Activated naive CD4-positive, alpha-beta T cell treated with anti-CD3 and anti-CD28 coated beads for 36 hours (primary cell): ENCODE measurements at regions of chr9 and their contacts with region 1.

Region 1: GRCh38 chr9:114805670-114806525 is at the start of gene TNFSF15:
- DNase-seq: peak; percentile 75
- H3K4me3 Mint-ChIP-seq: peak within 1 kb of the TSS; percentile 63
- H3K27ac Mint-ChIP-seq: peak within 1 kb of the TSS; percentile 26
- H3K4me1 Mint-ChIP-seq: peaks cover 28% of the 10 kb centered on the region
- H3K27me3 Mint-ChIP-seq: no peaks in the 10 kb centered on the region
- total RNA-seq, gene TNFSF15: 0.62 to 0.74 TPM

Region 2: GRCh38 chr9:114746601-114747346 is 59.1 kb before region 1 on chr9:
- CTCF ChIA-PET with region 1: no interaction called
- intact Hi-C with region 1: loop called (anchors 2 kb)
- DNase-seq: no peak
- H3K4me3 Mint-ChIP-seq: no peak overlapping the region
- H3K27ac Mint-ChIP-seq: no peak overlapping the region
- H3K4me1 Mint-ChIP-seq: peaks cover 22% of the 10 kb centered on the region
- H3K27me3 Mint-ChIP-seq: no peaks in the 10 kb centered on the region

Region 3: DNA sequence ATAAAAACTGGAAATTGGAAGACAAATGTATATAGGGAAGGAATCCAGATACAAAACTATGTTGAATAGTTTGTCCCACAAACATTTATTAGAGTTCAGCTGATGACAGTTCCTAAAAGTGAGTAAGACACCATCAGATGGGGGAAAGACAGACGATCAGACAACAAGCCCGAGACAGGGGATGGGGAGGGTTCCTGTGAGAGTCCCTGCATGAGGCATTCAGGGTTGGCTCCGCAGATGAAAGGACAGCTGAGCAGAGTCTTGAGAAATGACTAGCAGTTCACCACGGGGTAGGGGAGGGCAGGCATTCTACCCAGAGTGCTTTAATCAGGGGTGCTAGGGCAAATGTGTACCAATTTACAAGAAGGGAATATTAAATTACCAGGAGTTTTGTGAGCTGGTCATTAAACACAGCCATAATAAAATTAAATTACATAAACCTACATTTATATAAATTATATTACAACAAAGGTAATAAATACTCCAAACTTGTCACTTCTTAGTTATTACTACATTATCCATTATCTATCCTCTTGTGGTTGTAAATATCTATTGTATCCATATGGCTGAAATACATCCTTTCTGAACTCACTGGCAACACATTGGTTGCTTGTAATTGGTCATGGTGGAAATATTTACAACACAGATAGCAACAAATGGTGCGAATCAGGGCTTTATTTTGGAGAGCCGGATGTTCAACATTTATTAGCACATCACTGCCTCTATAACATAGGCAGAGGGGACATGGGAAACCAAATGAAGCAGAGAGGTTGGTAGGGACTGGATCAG is 27.9 kb before region 1 on chr9:
- CTCF ChIA-PET with region 1: no interaction called
- intact Hi-C with region 1: loop called (anchors 1 kb)
- DNase-seq: peak; percentile 89
- H3K4me3 Mint-ChIP-seq: no peak overlapping the region
- H3K27ac Mint-ChIP-seq: peak overlapping the region; percentile 60
- H3K4me1 Mint-ChIP-seq: peaks cover 26% of the 10 kb centered on the region
- H3K27me3 Mint-ChIP-seq: no peaks in the 10 kb centered on the region

Region 4: DNA sequence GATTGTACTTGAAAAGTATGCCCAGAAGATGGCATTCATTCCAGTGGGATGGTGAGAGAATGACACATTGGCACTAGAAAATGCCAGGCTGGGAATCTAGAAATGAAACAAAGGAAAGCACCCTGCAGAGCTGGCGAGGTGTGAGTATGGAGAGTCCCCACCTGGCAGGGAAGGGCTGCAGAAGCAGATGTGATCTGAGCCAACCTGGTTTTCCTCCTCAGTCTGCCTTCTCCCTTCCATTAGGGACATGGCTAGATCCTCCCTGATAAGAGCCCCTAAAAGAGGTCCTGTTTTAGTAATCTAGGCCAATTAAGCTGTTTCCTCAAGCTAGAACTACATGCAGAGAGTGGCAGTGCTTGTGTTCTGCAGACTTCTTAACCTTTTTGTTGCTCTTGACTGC is 24.6 kb after region 1 on chr9:
- CTCF ChIA-PET with region 1: no interaction called
- intact Hi-C with region 1: loop called (anchors 1 kb)
- DNase-seq: no peak
- H3K4me3 Mint-ChIP-seq: no peak overlapping the region
- H3K27ac Mint-ChIP-seq: no peak overlapping the region
- H3K4me1 Mint-ChIP-seq: peaks cover 16% of the 10 kb centered on the region
- H3K27me3 Mint-ChIP-seq: no peaks in the 10 kb centered on the region